ENCODE measurements at regions of chrX and their contacts with region 1.

Region 1: GRCh38 chrX:134186362-134187121 is 50.4 kb upstream of the CCDC160 start:
- DNase-seq: peak; percentile 50
- ATAC-seq: peak; percentile 78
- H3K4me3 Mint-ChIP-seq: peak overlapping the region; percentile 84
- H3K27ac Mint-ChIP-seq: peak overlapping the region; percentile 89
- H3K4me1 Mint-ChIP-seq: peaks cover 24% of the 10 kb centered on the region
- H3K27me3 Mint-ChIP-seq: peaks cover 2% of the 10 kb centered on the region

Region 2: DNA sequence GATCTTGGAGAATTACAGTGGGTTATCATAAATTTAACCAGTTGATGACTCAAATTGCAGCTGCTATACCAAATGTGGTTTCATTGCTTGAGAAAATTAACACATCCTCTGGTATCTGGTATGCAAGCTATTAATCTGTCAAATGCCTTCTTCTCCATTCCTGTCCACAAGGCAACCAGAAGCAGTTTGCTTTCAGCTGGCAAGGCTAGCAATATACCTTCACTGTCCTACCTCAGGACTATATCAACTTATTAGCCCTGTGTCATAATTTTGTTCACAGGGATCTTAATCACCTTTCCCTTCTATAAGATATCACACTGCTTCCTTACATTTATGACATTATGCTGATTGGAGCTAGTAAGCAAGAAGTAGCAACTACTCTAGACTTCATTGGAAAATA is 91.2 kb before region 1 on chrX:
- POLR2A ChIA-PET with region 1: no interaction called
- DNase-seq: no peak
- ATAC-seq: no peak
- H3K4me3 Mint-ChIP-seq: no peak overlapping the region
- H3K27ac Mint-ChIP-seq: no peak overlapping the region
- H3K4me1 Mint-ChIP-seq: no peaks in the 10 kb centered on the region
- H3K27me3 Mint-ChIP-seq: no peaks in the 10 kb centered on the region

Region 3: DNA sequence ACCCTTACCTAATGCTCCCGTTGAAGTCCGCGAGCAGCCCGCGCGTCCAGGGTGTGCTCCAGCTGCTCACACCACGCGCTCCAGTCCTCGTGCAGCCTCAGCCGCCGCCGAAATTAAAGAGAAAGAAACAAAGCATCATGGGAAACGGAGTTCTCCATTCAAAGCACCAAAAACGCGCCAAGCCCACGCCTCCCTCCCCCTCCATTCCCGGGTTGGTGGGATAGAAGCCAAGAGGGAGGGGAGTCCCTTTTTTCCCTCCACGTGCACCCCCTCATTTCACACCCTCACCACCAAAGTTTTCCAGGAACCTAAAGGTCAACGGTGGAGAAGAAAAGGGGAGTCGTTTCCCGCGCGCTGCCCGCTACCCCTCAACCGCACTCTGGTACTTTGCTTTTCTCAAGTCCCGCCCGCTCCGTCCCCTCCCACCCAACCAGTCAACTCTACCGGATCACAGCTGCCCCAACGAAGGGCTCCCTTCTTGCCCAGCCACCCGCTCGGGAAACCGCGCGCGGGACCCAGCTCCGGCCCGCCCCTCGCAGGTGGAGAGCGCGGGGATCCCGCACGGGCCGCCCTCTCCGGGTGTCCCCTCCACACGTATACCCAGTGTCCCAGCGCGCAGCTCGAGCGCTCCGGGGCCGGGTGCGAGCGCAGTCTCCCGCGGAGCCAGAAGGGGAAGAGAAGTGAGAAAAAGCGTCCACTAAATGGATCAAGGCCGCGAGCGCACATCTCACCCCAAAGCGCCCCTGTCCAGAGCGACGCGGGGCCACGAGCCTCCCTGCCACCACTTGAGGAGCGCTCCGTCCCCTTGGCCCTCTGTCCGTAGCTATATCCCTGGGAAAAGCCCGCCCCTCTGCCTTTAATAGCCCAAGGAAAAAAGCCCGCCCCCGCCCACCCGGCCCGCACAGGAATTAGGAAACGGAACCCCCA is 14.6 kb before region 1 on chrX:
- POLR2A ChIA-PET with region 1: interaction called, 87 read pairs
- DNase-seq: peak; percentile 61
- ATAC-seq: peak; percentile 59
- H3K4me3 Mint-ChIP-seq: peak overlapping the region; percentile 97
- H3K27ac Mint-ChIP-seq: peak overlapping the region; percentile 92
- H3K4me1 Mint-ChIP-seq: peaks cover 18% of the 10 kb centered on the region
- H3K27me3 Mint-ChIP-seq: peaks cover 7% of the 10 kb centered on the region

Region 4: GRCh38 chrX:134258202-134258601 is 71.7 kb after region 1 on chrX:
- POLR2A ChIA-PET with region 1: no interaction called
- DNase-seq: no peak
- ATAC-seq: no peak
- H3K4me3 Mint-ChIP-seq: no peak overlapping the region
- H3K27ac Mint-ChIP-seq: no peak overlapping the region
- H3K4me1 Mint-ChIP-seq: no peaks in the 10 kb centered on the region
- H3K27me3 Mint-ChIP-seq: peaks cover 2% of the 10 kb centered on the region

Measured in activated naive CD8-positive, alpha-beta T cell treated with anti-CD3 and anti-CD28 coated beads, Interleukin-2, amount 10 ng/mL, durations not matched to agents 7 days and 5 days (primary cell).